ENCODE measurements at regions of chr2 and their contacts with region 1.

Region 1: DNA sequence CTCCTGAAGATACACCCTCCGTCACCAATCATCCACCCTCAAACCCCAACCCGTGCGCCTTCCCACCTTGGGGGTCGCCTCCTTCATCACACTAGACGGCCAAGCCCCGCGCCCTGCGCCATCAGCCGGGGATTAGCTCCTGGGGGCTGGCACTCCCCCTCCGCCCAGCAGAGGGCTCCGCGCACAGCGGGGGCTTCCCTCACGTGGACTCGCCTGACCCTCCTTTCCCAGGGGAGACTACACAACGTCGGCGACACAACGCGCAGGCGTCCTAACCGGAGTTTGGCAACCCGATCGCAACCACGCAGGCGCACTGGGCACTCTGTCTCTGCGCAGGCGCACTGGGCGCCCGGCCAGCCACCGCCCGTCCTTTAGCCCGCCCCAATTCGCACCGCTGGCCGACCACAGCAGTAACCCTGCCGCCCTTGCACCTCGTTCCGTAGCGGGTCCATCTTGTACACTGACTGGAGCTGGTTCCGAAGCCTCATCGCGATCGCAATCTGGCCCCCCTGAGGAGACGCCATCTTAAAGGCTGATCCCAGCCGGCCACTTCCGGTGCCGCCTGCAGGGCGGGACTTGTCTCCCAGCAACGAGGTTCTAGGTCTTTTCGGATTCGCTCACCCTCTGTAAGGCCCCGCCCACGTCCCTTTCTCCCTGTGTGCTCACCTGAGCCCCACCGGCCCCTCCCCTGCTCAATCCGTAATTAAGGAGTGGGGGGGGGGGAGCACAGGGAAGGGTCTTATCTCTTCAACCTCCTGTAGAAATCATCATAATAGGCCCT is at the start of gene PCGF1:
- DNase-seq: peak; percentile 96 to 98
- H3K4me3 ChIP-seq: peak within 1 kb of the TSS; percentile 61 to 98 (median 92)
- H3K27ac ChIP-seq: peak within 1 kb of the TSS; percentile 99
- H3K4me1 ChIP-seq: peaks cover 3 to 25% (median 20%) of the 10 kb centered on the region in 4 experiments
- H3K27me3 ChIP-seq: peaks cover 48 to 80% (median 76%) of the 10 kb centered on the region in 4 experiments
- CTCF ChIP-seq: peak in 2 of 3 experiments; percentile 48 to 63; a peak in 3 of 4 replicates
- EP300 ChIP-seq: no peak
- POLR2A ChIP-seq: peak in 1 of 2 experiments; percentile 84; a peak in 2 of 3 replicates
- RAD21 ChIP-seq: peak; percentile 9 to 28; a peak in 1 of 4 replicates
- total RNA-seq, gene PCGF1: 10.0 and 13.8 TPM in 2 replicates

Region 2: GRCh38 chr2:74420006-74420405 is 87.3 kb before region 1 on chr2:
- CTCF ChIA-PET with region 1: no interaction called
- POLR2A ChIA-PET with region 1: no interaction called
- DNase-seq: no peak
- H3K4me3 ChIP-seq: no peak overlapping the region
- H3K27ac ChIP-seq: no peak overlapping the region
- H3K4me1 ChIP-seq: peaks cover 0 to 14% (median 3%) of the 10 kb centered on the region in 4 experiments; a peak in 4 of 7 replicates
- H3K27me3 ChIP-seq: 0 out of 7 replicates have a peak, but pooled peaks cover 0 to 2% (median 0%) of the 10 kb centered on the region in 4 experiments
- CTCF ChIP-seq: no peak
- EP300 ChIP-seq: no peak
- POLR2A ChIP-seq: no peak
- RAD21 ChIP-seq: no peak

Region 3: GRCh38 chr2:74488644-74489481 is 18.5 kb before region 1 on chr2:
- CTCF ChIA-PET with region 1: interaction called, 15 read pairs
- POLR2A ChIA-PET with region 1: interaction called, 59 read pairs
- DNase-seq: no peak
- H3K4me3 ChIP-seq: no peak overlapping the region
- H3K27ac ChIP-seq: no peak overlapping the region
- H3K4me1 ChIP-seq: no peaks in the 10 kb centered on the region
- H3K27me3 ChIP-seq: no peaks in the 10 kb centered on the region
- CTCF ChIP-seq: no peak
- EP300 ChIP-seq: no peak
- POLR2A ChIP-seq: no peak
- RAD21 ChIP-seq: no peak

Region 4: GRCh38 chr2:74658516-74658915 is 151.2 kb after region 1 on chr2:
- CTCF ChIA-PET with region 1: no interaction called
- POLR2A ChIA-PET with region 1: no interaction called
- DNase-seq: no peak
- H3K4me3 ChIP-seq: no peak overlapping the region
- H3K27ac ChIP-seq: no peak overlapping the region
- H3K4me1 ChIP-seq: peaks cover 0 to 6% (median 4%) of the 10 kb centered on the region in 4 experiments; a peak in 2 of 7 replicates
- H3K27me3 ChIP-seq: peaks cover 12 to 20% (median 18%) of the 10 kb centered on the region in 4 experiments
- CTCF ChIP-seq: no peak
- EP300 ChIP-seq: no peak
- POLR2A ChIP-seq: no peak
- RAD21 ChIP-seq: no peak

Measured in H1 (cell line).